OCI-LY7 (cell line): ENCODE measurements at regions of chr2 and their contacts with region 1.

Region 1: DNA sequence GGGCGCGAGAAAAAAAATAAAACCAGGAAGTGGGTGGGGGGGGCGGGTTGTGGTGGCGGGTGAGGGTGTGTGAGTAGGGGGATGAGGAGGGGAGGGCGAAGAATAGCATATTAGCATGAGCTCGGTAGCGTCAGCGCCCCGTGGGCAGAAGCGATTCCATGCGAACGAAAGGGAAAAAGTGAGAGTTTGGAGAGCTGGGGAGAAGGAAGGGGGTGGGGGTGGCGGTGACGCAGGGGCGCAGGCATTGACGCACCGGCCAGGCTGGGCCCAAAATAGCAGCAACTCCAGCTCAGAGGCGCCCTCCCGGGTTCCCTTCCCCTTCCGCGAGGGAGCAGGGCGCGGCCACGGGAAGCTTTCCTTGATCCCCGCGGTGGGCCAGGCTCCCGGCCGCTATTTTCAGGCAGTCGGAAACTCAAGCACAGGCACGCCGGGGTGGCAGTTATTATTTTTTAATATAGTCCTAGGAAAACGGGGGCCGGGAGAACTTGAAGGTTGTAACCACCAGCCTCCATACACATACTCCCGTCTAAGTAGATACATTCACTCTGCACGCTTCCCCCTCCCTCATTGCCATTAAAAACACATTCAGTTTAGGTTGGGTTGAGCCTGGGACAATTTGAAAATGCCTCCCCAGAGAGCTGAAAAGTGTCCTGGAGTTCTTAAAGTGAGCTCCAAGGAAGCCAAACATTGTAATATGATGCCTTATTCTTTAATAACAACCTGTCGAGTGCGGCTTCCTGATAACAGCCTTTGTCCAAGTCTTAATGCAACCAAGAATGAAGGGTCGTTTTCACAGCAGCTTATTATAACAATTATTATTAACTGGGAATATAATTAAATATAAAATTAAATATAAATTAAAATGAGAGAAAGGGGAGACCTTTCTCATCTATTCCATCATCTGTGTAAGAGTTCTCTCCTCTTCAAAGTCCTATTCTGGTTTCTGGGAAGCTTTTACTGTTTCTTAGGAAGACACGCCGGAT is 2.3 kb upstream of the NR4A2 start:
- DNase-seq: peak; percentile 7
- H3K4me3 ChIP-seq: peak overlapping the region; percentile 68
- H3K27ac ChIP-seq: no peak overlapping the region
- H3K4me1 ChIP-seq: peaks cover 10% of the 10 kb centered on the region
- CTCF ChIP-seq: no peak

Region 2: GRCh38 chr2:156400706-156401678 is 66.2 kb after region 1 on chr2:
- CTCF ChIA-PET with region 1: interaction called, 4 read pairs
- POLR2A ChIA-PET with region 1: no interaction called
- intact Hi-C with region 1: loop called (anchors 2 kb)
- DNase-seq: peak; percentile 75
- H3K4me3 ChIP-seq: peak overlapping the region; percentile 89
- H3K27ac ChIP-seq: peak overlapping the region; percentile 66
- H3K4me1 ChIP-seq: peaks cover 9% of the 10 kb centered on the region
- CTCF ChIP-seq: no peak

Region 3: GRCh38 chr2:156435715-156436496 is 101.1 kb after region 1 on chr2 and contains the start of gene GPD2:
- CTCF ChIA-PET with region 1: no interaction called
- POLR2A ChIA-PET with region 1: interaction called, 3 read pairs
- intact Hi-C with region 1: loop called (anchors 2 kb)
- DNase-seq: peak; percentile 39
- H3K4me3 ChIP-seq: peak within 1 kb of the TSS; percentile 67
- H3K27ac ChIP-seq: peak within 1 kb of the TSS; percentile 15
- H3K4me1 ChIP-seq: peaks cover 14% of the 10 kb centered on the region
- CTCF ChIP-seq: no peak
- total RNA-seq, gene GPD2: 6.6 and 6.9 TPM in 2 replicates

Region 4: DNA sequence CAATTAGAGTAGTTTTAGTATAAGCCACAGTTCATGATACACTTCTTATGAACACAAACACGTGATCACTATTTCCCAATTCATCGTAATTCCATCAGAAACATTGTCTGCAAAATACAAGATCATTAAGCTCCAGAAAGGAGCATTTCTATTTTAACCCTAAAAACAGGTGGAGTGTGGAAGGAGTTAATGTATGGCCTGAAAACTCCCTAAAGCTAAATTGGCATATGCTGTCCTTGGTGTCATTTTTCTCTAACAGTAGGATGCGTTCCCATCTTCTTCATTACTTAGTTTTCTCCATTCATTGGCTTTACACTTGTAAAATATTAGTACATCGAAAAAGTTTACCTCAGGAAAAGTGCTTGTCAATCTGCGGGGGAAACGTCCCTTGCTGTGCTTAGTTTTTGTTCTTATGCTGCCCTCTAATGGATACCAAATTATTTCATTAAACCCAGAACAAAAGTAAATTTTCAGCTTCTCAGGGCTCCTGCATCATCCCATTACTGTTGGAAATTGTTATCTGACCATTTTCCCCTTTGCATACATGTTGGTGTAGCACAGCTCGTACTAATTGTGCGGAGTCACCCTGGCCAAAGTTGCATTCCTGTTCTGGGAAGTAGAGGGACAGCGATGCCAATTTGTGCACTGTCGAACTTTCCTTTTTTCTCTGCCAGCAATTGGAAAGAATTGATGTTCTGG is 254.7 kb after region 1 on chr2:
- CTCF ChIA-PET with region 1: interaction called, 3 read pairs
- POLR2A ChIA-PET with region 1: no interaction called
- intact Hi-C with region 1: loop called (anchors 1 kb)
- DNase-seq: peak; percentile 35
- H3K4me3 ChIP-seq: no peak overlapping the region
- H3K27ac ChIP-seq: no peak overlapping the region
- H3K4me1 ChIP-seq: no peaks in the 10 kb centered on the region
- CTCF ChIP-seq: peak; percentile 77